ENCODE measurements at regions of chr19 and their contacts with region 1.

Region 1: DNA sequence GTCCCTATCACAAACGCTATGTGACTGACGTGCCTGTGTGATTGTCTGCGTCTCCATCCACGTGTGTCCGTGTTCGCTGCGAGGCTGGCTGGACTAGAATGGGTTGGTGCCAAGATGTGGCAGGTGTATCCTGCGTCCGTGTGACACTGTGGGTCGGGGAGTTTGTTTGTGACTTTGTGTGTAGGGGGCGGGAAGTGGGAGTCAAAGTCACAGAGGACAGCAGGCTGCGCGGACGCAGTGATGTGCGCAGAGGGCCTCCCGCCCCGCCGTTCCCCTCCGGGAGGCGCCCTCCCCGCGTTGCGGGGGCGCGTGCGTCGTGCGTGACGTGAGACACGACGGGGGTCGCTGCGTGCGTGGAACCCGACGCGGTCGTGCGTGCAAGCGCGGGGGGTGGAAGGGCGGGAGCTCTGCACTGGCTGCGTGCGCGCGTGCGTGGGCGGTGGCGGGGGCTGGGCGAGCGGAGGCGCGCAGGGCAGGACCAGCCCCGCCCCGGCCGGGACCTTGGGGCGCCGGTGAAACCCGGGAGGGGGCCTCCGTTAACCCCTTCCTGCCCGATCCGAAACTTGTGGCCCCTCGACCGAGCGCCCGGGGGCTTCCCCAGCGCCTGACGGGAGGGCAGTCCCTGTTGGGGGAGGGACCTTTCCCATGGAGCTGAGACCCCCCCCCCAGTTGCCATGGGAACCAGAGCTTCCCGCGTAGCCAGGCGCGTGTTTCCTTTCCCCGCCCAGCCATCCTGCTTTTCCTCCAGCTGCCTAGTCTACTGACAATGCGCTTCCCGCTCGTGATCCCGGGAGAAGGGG is 7.1 kb upstream of the HOOK2 start:
- DNase-seq: no peak
- ATAC-seq: peak; percentile 58
- H3K4me3 ChIP-seq: peak overlapping the region; percentile 65
- H3K27ac ChIP-seq: peak overlapping the region; percentile 97
- H3K4me1 ChIP-seq: peaks cover 71% of the 10 kb centered on the region
- H3K27me3 ChIP-seq: no peaks in the 10 kb centered on the region
- CTCF ChIP-seq: no peak
- EP300 ChIP-seq: peak; percentile 80 to 81
- POLR2A ChIP-seq: peak; percentile 73
- RAD21 ChIP-seq: no peak

Region 2: GRCh38 chr19:12610540-12611360 is 171.7 kb before region 1 on chr19 and contains the starts of genes ZNF490 and ZNF791:
- CTCF ChIA-PET with region 1: no interaction called
- POLR2A ChIA-PET with region 1: no interaction called
- RAD21 ChIA-PET with region 1: no interaction called
- SMC1A ChIA-PET with region 1: no interaction called
- in situ Hi-C with region 1: no loop called
- intact Hi-C with region 1: loop called (anchors 5 kb)
- DNase-seq: peak; percentile 89
- ATAC-seq: peak; percentile 83
- H3K4me3 ChIP-seq: peak within 1 kb of the TSS; percentile 96
- H3K27ac ChIP-seq: peak within 1 kb of the TSS; percentile 95
- H3K4me1 ChIP-seq: 0 out of 2 replicates have a peak, but pooled peaks cover 7% of the 10 kb centered on the region
- H3K27me3 ChIP-seq: no peaks in the 10 kb centered on the region
- CTCF ChIP-seq: no peak
- EP300 ChIP-seq: 0 out of 4 replicates have a peak, but pooled peaks of 1 of the 2 experiments have one; percentile 16
- POLR2A ChIP-seq: peak; percentile 98
- RAD21 ChIP-seq: no peak
- polyA plus RNA-seq, gene ZNF490: 0.57 to 1.4 TPM
- polyA plus RNA-seq, gene ZNF791: 7.5 to 9.2 TPM

Region 3: DNA sequence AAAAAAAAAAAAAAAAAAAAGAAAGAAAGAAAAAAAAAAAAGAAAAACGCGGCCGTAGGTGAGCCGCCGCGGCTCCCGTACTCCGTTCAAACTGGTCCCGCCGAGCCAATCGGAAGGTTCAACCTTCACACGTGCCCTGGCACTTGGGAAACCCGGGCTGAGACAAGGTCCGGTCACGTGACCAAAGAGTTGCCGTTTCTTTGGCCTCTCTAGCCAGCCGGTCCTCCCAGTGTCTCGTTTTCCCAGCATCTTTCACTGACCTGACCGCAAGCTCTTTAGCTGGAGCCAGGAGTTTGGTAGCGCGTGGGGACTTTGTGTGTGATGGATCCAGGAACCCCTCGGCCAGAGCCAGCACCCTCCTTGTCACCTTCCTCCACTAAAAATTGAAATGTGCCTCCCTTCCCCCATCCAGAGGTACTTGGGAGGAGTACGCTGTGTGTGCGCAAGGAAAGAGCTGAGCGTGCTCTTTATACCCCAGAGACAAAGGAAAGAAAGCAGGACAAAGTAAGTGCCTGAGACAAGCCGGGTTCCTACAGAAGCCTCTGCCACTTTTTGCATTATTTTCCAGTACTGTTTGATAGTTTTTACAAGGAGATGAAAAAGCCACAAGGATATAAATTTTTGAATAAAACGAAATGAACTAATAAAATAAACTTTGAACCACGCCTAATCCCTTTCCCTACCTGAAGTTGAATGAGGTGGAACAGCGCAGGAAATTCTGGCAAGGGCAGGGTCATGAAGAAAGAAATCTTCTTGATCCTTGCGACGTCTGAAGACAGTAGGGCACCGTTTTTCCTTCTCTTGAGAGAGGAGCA is 59.7 kb before region 1 on chr19:
- CTCF ChIA-PET with region 1: interaction called, 6 read pairs
- POLR2A ChIA-PET with region 1: interaction called, 11 read pairs
- RAD21 ChIA-PET with region 1: no interaction called
- SMC1A ChIA-PET with region 1: no interaction called
- in situ Hi-C with region 1: no loop called
- intact Hi-C with region 1: no loop called
- DNase-seq: peak; percentile 81
- ATAC-seq: peak; percentile 87
- H3K4me3 ChIP-seq: peak overlapping the region; percentile 91
- H3K27ac ChIP-seq: peak overlapping the region; percentile 81
- H3K4me1 ChIP-seq: peaks cover 8% of the 10 kb centered on the region; the same call in 1 of the 2 replicates
- H3K27me3 ChIP-seq: no peaks in the 10 kb centered on the region
- CTCF ChIP-seq: no peak
- EP300 ChIP-seq: peak; percentile 4 to 40; a peak in 1 of 4 replicates
- POLR2A ChIP-seq: peak; percentile 51; the same call in 1 of the 2 replicates
- RAD21 ChIP-seq: no peak